Activated CD8-positive, alpha-beta T cell treated with anti-CD3 and anti-CD28 coated beads for 36 hours (primary cell): ENCODE measurements at regions of chr22 and their contacts with region 1.

Region 1: GRCh38 chr22:23178512-23179254 is 1.6 kb upstream of the BCR start:
- DNase-seq: peak; percentile 62
- ATAC-seq: no peak
- H3K4me3 Mint-ChIP-seq: peak overlapping the region; percentile 3
- H3K27ac Mint-ChIP-seq: no peak overlapping the region
- H3K4me1 Mint-ChIP-seq: peaks cover 42% of the 10 kb centered on the region
- H3K27me3 Mint-ChIP-seq: no peaks in the 10 kb centered on the region
- CTCF ChIP-seq: peak; percentile 100

Region 2: GRCh38 chr22:23225724-23226496 is 47.2 kb after region 1 on chr22:
- CTCF ChIA-PET with region 1: interaction called, 10 read pairs
- POLR2A ChIA-PET with region 1: interaction called, 4 read pairs
- intact Hi-C with region 1: no loop called
- DNase-seq: peak; percentile 41
- ATAC-seq: peak; percentile 67
- H3K4me3 Mint-ChIP-seq: no peak overlapping the region
- H3K27ac Mint-ChIP-seq: peak overlapping the region; percentile 75
- H3K4me1 Mint-ChIP-seq: peaks cover 70% of the 10 kb centered on the region
- H3K27me3 Mint-ChIP-seq: no peaks in the 10 kb centered on the region
- CTCF ChIP-seq: no peak

Region 3: GRCh38 chr22:23243006-23243573 is 64.4 kb after region 1 on chr22:
- CTCF ChIA-PET with region 1: interaction called, 22 read pairs
- POLR2A ChIA-PET with region 1: interaction called, 8 read pairs
- intact Hi-C with region 1: loop called (anchors 5 kb)
- DNase-seq: peak; percentile 87
- ATAC-seq: peak; percentile 96
- H3K4me3 Mint-ChIP-seq: peak overlapping the region; percentile 65
- H3K27ac Mint-ChIP-seq: peak overlapping the region; percentile 81
- H3K4me1 Mint-ChIP-seq: peaks cover 85% of the 10 kb centered on the region
- H3K27me3 Mint-ChIP-seq: no peaks in the 10 kb centered on the region
- CTCF ChIP-seq: no peak

Region 4: DNA sequence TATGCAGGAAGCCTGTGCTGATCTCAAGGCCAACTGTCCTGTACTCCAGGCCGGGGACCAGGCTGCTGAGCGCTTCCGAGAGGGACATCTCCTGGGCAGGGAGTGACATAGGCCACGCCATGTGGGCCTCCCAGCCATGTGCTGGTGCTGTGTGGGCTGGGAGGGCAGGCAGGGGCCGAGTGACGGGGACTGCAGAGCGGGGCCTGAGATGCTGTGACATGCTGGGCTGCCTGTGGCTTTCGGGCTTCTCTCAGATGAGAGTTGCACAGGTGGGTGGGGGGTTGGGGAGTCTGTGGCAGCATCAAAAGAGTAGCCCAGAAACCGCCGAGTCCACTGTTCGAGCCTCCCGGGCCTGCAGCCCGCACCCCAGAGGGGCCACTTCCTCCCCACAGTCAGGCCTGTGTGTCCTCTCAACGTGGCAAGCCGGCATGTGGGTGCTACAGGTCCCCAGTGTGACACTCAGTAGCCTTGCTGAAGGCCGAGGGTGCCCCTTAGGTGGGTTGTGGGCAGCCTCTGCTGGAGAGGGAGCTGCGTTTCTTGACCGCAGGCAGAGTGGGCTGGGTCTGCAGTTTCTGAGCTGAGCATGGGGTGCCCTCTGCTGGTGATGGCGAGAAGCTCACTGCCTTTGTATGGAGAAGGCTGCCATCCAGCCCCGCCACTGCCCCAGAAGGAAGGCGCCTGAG is 102.9 kb after region 1 on chr22:
- CTCF ChIA-PET with region 1: interaction called, 237 read pairs
- POLR2A ChIA-PET with region 1: interaction called, 4 read pairs
- intact Hi-C with region 1: loop called (anchors 2 kb)
- DNase-seq: peak; percentile 89
- ATAC-seq: peak; percentile 86
- H3K4me3 Mint-ChIP-seq: no peak overlapping the region
- H3K27ac Mint-ChIP-seq: no peak overlapping the region
- H3K4me1 Mint-ChIP-seq: peaks cover 32% of the 10 kb centered on the region
- H3K27me3 Mint-ChIP-seq: no peaks in the 10 kb centered on the region
- CTCF ChIP-seq: peak; percentile 94

Region 5: DNA sequence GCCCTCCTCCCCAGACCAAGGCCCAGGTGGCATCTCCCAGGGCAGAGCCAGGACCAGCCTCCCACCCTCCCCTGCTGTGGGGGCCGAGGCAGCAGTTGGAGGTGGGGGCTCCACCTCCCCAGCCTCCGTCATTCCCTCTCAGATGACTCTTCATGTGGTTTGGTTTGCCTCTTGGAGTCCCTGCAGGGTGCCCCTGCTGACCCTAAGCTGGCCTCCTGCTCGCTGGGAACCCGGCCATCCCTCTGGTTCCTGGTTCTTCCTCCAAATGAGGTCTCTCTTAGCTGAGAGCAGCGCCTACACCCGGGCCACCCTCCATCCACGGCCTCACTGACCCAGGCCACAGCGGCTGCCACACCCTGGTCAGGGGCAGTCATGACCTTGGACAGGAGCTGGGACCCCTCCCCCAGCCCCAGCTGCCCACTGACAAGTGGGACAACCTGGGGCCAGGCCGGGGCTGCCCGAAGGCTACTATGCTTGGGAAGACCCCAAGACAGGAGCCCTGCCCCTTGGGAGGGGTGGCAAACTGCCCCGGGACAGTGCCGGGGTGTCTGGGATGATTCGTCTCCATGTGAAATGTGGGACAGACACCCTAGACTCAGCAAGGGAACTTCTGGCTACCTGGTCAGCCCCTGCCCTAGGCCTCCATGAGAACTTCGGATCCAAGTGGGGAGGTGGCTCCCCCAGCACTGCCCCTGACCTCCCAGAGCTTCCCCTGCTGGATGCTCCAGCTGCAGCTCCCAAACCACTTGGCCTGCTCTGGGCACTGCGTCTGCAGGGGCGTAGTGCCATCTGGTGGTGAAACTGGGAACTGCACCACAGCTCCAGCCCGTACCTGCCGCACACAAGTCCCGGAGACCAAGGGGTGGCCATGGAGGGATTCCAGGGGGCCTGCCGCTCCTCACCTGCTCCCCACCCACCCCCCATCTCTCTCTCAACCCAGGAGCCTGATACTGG is 206.9 kb after region 1 on chr22:
- CTCF ChIA-PET with region 1: interaction called, 11 read pairs
- POLR2A ChIA-PET with region 1: no interaction called
- intact Hi-C with region 1: no loop called
- DNase-seq: peak; percentile 87
- ATAC-seq: peak; percentile 93
- H3K4me3 Mint-ChIP-seq: no peak overlapping the region
- H3K27ac Mint-ChIP-seq: no peak overlapping the region
- H3K4me1 Mint-ChIP-seq: no peaks in the 10 kb centered on the region
- H3K27me3 Mint-ChIP-seq: peaks cover 2% of the 10 kb centered on the region
- CTCF ChIP-seq: peak; percentile 95

Region 6: GRCh38 chr22:23565288-23565941 is 386.7 kb after region 1 on chr22:
- CTCF ChIA-PET with region 1: no interaction called
- POLR2A ChIA-PET with region 1: no interaction called
- intact Hi-C with region 1: no loop called
- DNase-seq: peak; percentile 30
- ATAC-seq: peak; percentile 77
- H3K4me3 Mint-ChIP-seq: peak overlapping the region; percentile 59
- H3K27ac Mint-ChIP-seq: no peak overlapping the region
- H3K4me1 Mint-ChIP-seq: peaks cover 6% of the 10 kb centered on the region
- H3K27me3 Mint-ChIP-seq: peaks cover 22% of the 10 kb centered on the region
- CTCF ChIP-seq: no peak